CD8-positive, alpha-beta T cell (primary cell): ENCODE measurements at regions of chr1 and their contacts with region 1.

Region 1: GRCh38 chr1:95905818-95906395 is 671.9 kb downstream of the RWDD3 start:
- DNase-seq: no peak
- ATAC-seq: no peak
- H3K4me3 ChIP-seq: no peak overlapping the region
- H3K4me3 Mint-ChIP-seq: no peak overlapping the region
- H3K27ac ChIP-seq: no peak overlapping the region
- H3K27ac Mint-ChIP-seq: no peak overlapping the region
- H3K4me1 ChIP-seq: no peaks in the 10 kb centered on the region
- H3K4me1 Mint-ChIP-seq: no peaks in the 10 kb centered on the region
- H3K27me3 ChIP-seq: no peaks in the 10 kb centered on the region
- H3K27me3 Mint-ChIP-seq: no peaks in the 10 kb centered on the region
- CTCF ChIP-seq: no peak

Region 2: DNA sequence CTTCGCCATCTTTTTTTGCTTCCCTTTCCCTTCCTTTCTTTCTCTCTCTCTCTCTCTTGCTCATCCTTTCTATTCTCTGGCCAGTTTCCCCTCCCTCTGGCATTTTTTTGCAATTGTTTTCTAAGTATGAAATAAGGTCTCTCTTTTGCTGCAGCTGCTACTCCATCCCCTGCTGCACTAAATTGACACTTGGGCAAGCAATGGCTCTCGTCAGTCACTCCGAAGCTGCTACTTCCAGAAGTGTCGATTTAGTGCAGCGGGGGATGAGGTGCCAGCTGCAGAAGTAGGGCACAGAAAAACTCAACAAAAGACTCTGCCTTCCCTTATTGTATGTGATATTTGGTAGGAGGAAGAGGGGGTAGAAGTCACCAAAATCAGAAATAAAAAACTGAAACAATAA is 29.6 kb before region 1 on chr1:
- CTCF ChIA-PET with region 1: no interaction called
- POLR2A ChIA-PET with region 1: no interaction called
- intact Hi-C with region 1: loop called in 1 of 2 experiments (anchors 1 kb)
- DNase-seq: no peak
- ATAC-seq: no peak
- H3K4me3 ChIP-seq: no peak overlapping the region
- H3K4me3 Mint-ChIP-seq: no peak overlapping the region
- H3K27ac ChIP-seq: no peak overlapping the region
- H3K27ac Mint-ChIP-seq: no peak overlapping the region
- H3K4me1 ChIP-seq: no peaks in the 10 kb centered on the region
- H3K4me1 Mint-ChIP-seq: no peaks in the 10 kb centered on the region
- H3K27me3 ChIP-seq: no peaks in the 10 kb centered on the region
- H3K27me3 Mint-ChIP-seq: no peaks in the 10 kb centered on the region
- CTCF ChIP-seq: no peak

Region 3: GRCh38 chr1:95888941-95889390 is 16.9 kb before region 1 on chr1:
- CTCF ChIA-PET with region 1: no interaction called
- POLR2A ChIA-PET with region 1: no interaction called
- intact Hi-C with region 1: no loop called
- DNase-seq: no peak
- ATAC-seq: no peak
- H3K4me3 ChIP-seq: no peak overlapping the region
- H3K4me3 Mint-ChIP-seq: no peak overlapping the region
- H3K27ac ChIP-seq: no peak overlapping the region
- H3K27ac Mint-ChIP-seq: no peak overlapping the region
- H3K4me1 ChIP-seq: no peaks in the 10 kb centered on the region
- H3K4me1 Mint-ChIP-seq: no peaks in the 10 kb centered on the region
- H3K27me3 ChIP-seq: no peaks in the 10 kb centered on the region
- H3K27me3 Mint-ChIP-seq: no peaks in the 10 kb centered on the region
- CTCF ChIP-seq: no peak